T-cell (primary cell): ENCODE measurements at regions of chrX and their contacts with region 1.

Region 1: DNA sequence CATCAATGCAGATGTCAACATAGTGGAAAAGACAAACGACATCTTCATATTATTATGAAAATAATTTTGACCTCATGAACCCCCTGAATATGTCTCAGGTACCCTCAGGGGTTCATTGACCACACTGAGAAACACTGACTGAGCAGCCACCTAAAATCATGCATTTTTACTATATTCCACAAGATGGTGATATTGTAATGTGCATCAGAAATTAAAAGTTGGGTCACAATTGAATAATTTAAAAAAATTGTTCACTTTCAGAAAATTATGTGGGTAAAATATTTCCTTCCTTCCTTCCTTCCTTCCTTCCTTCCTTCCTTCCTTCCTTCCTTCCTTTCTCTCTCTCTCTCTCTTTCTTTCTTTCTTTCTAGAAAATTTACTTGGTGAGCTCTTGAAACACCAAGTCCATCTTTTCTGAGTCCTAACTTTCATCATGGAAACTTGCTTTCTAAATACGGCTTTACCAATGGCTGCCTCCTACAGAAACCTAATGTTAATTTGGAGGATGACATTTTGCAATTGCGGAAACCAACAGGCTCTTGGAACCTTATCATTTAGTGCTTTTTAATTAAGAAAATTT is 103.6 kb downstream of the RTL3 start:
- DNase-seq: peak in 1 of 35 experiments; percentile 54
- ATAC-seq: no peak
- H3K4me3 ChIP-seq: no peak overlapping the region
- H3K4me3 Mint-ChIP-seq: peak overlapping the region in 1 of 3 donors; percentile 17
- H3K27ac ChIP-seq: no peak overlapping the region
- H3K27ac Mint-ChIP-seq: peak overlapping the region; percentile 28 to 78
- H3K4me1 ChIP-seq: peaks cover 0 to 4% of the 10 kb centered on the region in 2 experiments
- H3K4me1 Mint-ChIP-seq: peaks cover 2 to 6% (median 4%) of the 10 kb centered on the region in 3 donors
- H3K27me3 ChIP-seq: no peaks in the 10 kb centered on the region
- H3K27me3 Mint-ChIP-seq: no peaks in the 10 kb centered on the region

Region 2: DNA sequence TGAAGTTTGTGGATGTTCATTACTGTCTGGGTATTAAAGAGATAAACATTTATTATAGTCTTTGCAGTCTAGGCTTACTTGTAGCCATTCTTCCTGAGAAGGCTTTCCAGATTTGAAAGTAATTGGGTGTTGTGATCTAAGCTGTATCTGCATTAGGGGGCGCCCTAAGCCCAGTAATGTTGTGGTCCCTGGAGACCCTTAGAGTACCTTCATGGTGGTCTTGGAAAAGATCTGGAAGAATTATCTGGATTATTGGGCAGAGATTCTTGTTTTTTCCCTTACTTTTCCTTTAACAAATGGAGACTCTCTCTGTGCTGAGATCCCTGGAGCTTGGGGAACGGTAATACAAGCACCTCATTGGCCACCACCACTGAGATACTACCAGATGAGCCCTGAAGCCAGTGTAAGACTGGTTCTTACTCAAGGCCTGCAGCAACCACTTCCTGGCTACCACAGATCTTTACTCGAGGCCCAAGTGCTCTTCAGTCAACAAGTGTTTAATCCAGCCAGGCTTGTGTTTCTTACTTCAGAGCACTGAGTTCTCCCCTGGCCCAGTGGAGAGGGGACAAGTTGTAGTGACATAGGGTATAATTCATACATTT is 40.5 kb after region 1 on chrX:
- CTCF ChIA-PET with region 1: no interaction called
- POLR2A ChIA-PET with region 1: no interaction called
- DNase-seq: peak in 1 of 35 experiments; percentile 15
- ATAC-seq: no peak
- H3K4me3 ChIP-seq: no peak overlapping the region
- H3K4me3 Mint-ChIP-seq: no peak overlapping the region
- H3K27ac ChIP-seq: no peak overlapping the region
- H3K27ac Mint-ChIP-seq: no peak overlapping the region
- H3K4me1 ChIP-seq: no peaks in the 10 kb centered on the region
- H3K4me1 Mint-ChIP-seq: peaks cover 0 to 1% (median 0%) of the 10 kb centered on the region in 3 donors
- H3K27me3 ChIP-seq: no peaks in the 10 kb centered on the region
- H3K27me3 Mint-ChIP-seq: peaks cover 0 to 12% of the 10 kb centered on the region in 2 donors

Region 3: GRCh38 chrX:78673256-78673655 is 117.8 kb after region 1 on chrX:
- CTCF ChIA-PET with region 1: no interaction called
- POLR2A ChIA-PET with region 1: no interaction called
- DNase-seq: no peak
- ATAC-seq: no peak
- H3K4me3 ChIP-seq: no peak overlapping the region
- H3K4me3 Mint-ChIP-seq: no peak overlapping the region
- H3K27ac ChIP-seq: no peak overlapping the region
- H3K27ac Mint-ChIP-seq: no peak overlapping the region
- H3K4me1 ChIP-seq: no peaks in the 10 kb centered on the region
- H3K4me1 Mint-ChIP-seq: no peaks in the 10 kb centered on the region
- H3K27me3 ChIP-seq: no peaks in the 10 kb centered on the region
- H3K27me3 Mint-ChIP-seq: peaks cover 0 to 6% of the 10 kb centered on the region in 2 donors

Region 4: DNA sequence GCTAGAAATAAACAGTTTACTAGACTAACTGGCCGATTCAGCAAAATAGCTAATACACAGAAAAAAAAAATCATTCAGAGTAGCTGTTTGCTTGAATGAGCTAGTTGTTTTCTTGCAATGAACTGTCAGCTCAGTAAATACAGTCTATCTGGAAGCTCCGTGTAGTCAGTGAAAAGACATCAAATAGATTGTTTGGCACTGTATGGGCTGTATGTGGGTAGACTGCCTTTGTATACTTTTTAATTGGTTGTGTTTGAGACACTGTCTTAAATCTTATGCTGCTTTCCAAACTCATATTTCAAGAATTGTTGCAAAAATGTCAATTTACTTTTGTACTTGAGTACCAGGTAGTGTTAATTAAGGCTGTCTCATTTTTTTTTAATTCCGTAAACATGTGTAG is 527.4 kb after region 1 on chrX:
- CTCF ChIA-PET with region 1: interaction called, 3 to 10 read pairs
- POLR2A ChIA-PET with region 1: no interaction called
- DNase-seq: no peak
- ATAC-seq: peak in 2 of 4 experiments; percentile 44 to 53
- H3K4me3 ChIP-seq: no peak overlapping the region
- H3K4me3 Mint-ChIP-seq: peak overlapping the region; percentile 28 to 54 (median 37)
- H3K27ac ChIP-seq: peak overlapping the region; percentile 38
- H3K27ac Mint-ChIP-seq: peak overlapping the region; percentile 79 to 81
- H3K4me1 ChIP-seq: peaks cover 6 to 11% of the 10 kb centered on the region in 2 experiments
- H3K4me1 Mint-ChIP-seq: peaks cover 16 to 50% (median 45%) of the 10 kb centered on the region in 3 donors
- H3K27me3 ChIP-seq: no peaks in the 10 kb centered on the region
- H3K27me3 Mint-ChIP-seq: peaks cover 0 to 6% of the 10 kb centered on the region in 2 donors